ENCODE measurements at regions of chr10 and their contacts with region 1.

Region 1: GRCh38 chr10:3482200-3483138 is 302.5 kb downstream of the KLF6 start:
- DNase-seq: peak; percentile 87 to 89
- H3K4me3 ChIP-seq: no peak overlapping the region
- H3K4me3 Mint-ChIP-seq: peak overlapping the region; percentile 64
- H3K27ac Mint-ChIP-seq: peak overlapping the region; percentile 90
- H3K4me1 ChIP-seq: peaks cover 35% of the 10 kb centered on the region
- H3K4me1 Mint-ChIP-seq: peaks cover 38% of the 10 kb centered on the region
- H3K27me3 ChIP-seq: no peaks in the 10 kb centered on the region
- H3K27me3 Mint-ChIP-seq: no peaks in the 10 kb centered on the region
- CTCF ChIP-seq: no peak

Region 2: GRCh38 chr10:3500408-3500856 is 18.0 kb after region 1 on chr10:
- CTCF ChIA-PET with region 1: no interaction called
- POLR2A ChIA-PET with region 1: no interaction called
- intact Hi-C with region 1: loop called (anchors 1 kb)
- DNase-seq: peak; percentile 86 to 90
- H3K4me3 ChIP-seq: no peak overlapping the region
- H3K4me3 Mint-ChIP-seq: peak overlapping the region; percentile 42
- H3K27ac Mint-ChIP-seq: peak overlapping the region; percentile 81
- H3K4me1 ChIP-seq: peaks cover 15% of the 10 kb centered on the region
- H3K4me1 Mint-ChIP-seq: peaks cover 32% of the 10 kb centered on the region
- H3K27me3 ChIP-seq: no peaks in the 10 kb centered on the region
- H3K27me3 Mint-ChIP-seq: peaks cover 5% of the 10 kb centered on the region
- CTCF ChIP-seq: no peak

Region 3: GRCh38 chr10:3525832-3526449 is 43.5 kb after region 1 on chr10:
- CTCF ChIA-PET with region 1: no interaction called
- POLR2A ChIA-PET with region 1: no interaction called
- intact Hi-C with region 1: no loop called
- DNase-seq: no peak
- H3K4me3 ChIP-seq: no peak overlapping the region
- H3K4me3 Mint-ChIP-seq: no peak overlapping the region
- H3K27ac Mint-ChIP-seq: no peak overlapping the region
- H3K4me1 ChIP-seq: 0 out of 2 replicates have a peak, but pooled peaks cover 4% of the 10 kb centered on the region
- H3K4me1 Mint-ChIP-seq: peaks cover 7% of the 10 kb centered on the region
- H3K27me3 ChIP-seq: no peaks in the 10 kb centered on the region
- H3K27me3 Mint-ChIP-seq: no peaks in the 10 kb centered on the region
- CTCF ChIP-seq: no peak

Region 4: DNA sequence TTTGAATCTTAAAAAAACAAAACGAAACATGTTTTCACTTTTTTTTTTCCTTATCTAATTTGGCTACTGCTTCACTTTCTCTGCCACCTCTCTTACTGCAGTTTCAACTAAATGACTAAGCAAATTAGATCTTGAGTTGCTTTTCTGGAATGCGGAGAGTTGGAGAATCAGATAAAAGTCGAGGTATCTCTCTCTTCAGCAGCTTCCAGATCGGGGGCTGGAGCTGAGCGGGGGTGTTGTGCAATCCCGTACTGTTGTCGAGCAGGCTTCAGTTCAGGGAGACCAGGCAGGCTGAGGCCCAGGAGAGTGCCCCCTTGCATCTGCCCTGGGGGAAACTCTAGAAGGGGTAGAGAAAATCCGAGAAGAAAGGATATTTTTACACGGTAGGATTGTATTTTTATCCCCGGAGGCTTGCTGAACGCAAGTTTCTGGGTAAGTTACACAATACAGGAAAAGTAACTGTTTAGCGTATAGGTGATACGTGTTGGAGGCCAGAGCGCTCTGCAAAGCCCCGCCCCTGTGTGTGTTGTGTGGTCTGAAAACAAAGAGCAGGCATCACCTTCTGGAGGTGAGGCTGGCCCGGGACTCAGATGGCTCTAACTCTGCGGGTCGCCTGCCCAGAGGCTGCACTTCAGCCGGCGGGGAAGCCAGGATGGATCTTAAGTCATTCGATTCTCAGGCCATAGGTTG is 186.0 kb after region 1 on chr10:
- CTCF ChIA-PET with region 1: no interaction called
- POLR2A ChIA-PET with region 1: no interaction called
- intact Hi-C with region 1: loop called (anchors 1 kb)
- DNase-seq: peak; percentile 85 to 91
- H3K4me3 ChIP-seq: peak overlapping the region; percentile 4
- H3K4me3 Mint-ChIP-seq: peak overlapping the region; percentile 75
- H3K27ac Mint-ChIP-seq: peak overlapping the region; percentile 96
- H3K4me1 ChIP-seq: peaks cover 24% of the 10 kb centered on the region
- H3K4me1 Mint-ChIP-seq: peaks cover 14% of the 10 kb centered on the region
- H3K27me3 ChIP-seq: no peaks in the 10 kb centered on the region
- H3K27me3 Mint-ChIP-seq: no peaks in the 10 kb centered on the region
- CTCF ChIP-seq: no peak